Activated naive CD4-positive, alpha-beta T cell treated with anti-CD3 and anti-CD28 coated beads for 36 hours (primary cell): ENCODE measurements at regions of chr16 and their contacts with region 1.

Region 1: GRCh38 chr16:69286941-69287713 is 24.0 kb upstream of the VPS4A start:
- DNase-seq: peak; percentile 68
- H3K4me3 Mint-ChIP-seq: no peak overlapping the region
- H3K27ac Mint-ChIP-seq: no peak overlapping the region
- H3K4me1 Mint-ChIP-seq: peaks cover 2% of the 10 kb centered on the region
- H3K27me3 Mint-ChIP-seq: no peaks in the 10 kb centered on the region

Region 2: DNA sequence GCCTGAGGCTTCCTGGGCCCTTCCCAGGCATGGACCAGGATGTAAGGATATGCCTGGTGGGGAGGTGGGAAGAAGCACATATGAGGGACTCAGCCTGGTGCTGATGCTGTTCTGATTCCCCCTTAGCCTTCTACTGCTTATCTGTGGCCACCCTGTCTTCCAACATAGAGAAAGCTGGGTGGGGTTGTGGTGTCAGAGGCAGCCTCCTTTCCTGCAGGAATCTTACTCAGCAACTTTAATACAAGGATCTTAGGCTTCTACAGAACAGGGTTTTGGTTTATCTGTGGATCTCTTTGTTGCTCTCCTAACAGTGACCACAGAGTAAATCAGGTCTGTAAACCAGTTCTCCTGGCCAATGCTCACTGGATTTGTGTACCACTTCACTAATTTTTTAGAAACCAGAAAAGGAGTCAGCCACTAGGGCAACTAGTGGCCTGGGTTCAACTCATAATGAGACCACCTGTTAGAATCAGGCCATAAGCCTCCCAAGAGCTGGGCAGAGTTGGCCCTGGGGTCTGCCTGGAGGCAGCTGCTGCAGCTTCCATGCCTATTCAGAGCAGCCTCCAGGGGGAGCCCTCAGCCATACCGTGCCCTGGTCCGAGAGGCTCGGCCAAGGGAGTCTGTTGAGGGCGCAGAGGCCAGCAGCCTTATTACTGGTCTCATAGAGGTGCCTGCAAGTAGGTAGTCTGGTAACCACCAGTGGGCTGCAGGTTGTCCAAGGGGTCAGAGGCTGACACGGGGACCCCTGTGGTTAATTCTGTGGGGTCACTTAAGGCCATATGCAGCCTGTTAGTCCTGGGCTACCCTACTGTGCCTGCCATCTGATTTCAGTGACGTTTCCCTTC is 174.6 kb before region 1 on chr16:
- CTCF ChIA-PET with region 1: interaction called, 5 read pairs
- intact Hi-C with region 1: loop called (anchors 1 kb)
- DNase-seq: peak; percentile 65
- H3K4me3 Mint-ChIP-seq: no peak overlapping the region
- H3K27ac Mint-ChIP-seq: no peak overlapping the region
- H3K4me1 Mint-ChIP-seq: peaks cover 7% of the 10 kb centered on the region
- H3K27me3 Mint-ChIP-seq: peaks cover 6% of the 10 kb centered on the region

Region 3: DNA sequence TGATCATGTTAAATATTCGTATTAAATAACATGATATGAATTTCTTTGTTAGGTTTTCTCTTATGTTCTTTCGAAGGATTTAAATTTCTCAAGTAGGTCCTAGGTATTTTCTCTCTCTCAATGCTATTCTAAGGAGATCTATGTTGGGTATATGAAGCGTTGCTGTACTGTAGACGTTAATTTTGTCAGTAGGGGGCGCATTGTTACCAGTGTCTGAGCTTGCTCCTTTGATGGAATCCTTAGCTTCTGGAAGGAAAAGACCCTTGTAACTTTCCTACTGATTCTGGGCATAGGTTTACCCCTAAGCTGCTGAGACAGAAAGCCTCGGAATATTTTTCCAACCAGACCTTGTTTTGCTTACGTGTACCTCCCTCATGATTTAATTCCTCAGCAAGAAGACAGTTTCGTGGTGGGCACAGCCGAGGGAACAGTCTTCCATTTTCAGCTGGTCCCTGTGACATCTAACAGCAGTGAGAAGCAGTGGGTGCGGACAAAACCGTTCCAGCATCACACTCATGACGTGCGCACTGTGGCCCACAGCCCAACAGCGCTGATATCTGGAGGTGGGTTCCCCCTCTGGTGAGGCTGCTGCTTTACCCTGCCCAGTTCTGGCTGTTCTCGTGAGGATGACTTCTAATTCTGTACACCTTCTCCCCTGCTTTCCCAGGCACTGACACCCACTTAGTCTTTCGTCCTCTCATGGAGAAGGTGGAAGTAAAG is 136.8 kb before region 1 on chr16:
- CTCF ChIA-PET with region 1: interaction called, 91 read pairs
- intact Hi-C with region 1: loop called (anchors 1 kb)
- DNase-seq: peak; percentile 66
- H3K4me3 Mint-ChIP-seq: no peak overlapping the region
- H3K27ac Mint-ChIP-seq: no peak overlapping the region
- H3K4me1 Mint-ChIP-seq: no peaks in the 10 kb centered on the region
- H3K27me3 Mint-ChIP-seq: no peaks in the 10 kb centered on the region

Region 4: DNA sequence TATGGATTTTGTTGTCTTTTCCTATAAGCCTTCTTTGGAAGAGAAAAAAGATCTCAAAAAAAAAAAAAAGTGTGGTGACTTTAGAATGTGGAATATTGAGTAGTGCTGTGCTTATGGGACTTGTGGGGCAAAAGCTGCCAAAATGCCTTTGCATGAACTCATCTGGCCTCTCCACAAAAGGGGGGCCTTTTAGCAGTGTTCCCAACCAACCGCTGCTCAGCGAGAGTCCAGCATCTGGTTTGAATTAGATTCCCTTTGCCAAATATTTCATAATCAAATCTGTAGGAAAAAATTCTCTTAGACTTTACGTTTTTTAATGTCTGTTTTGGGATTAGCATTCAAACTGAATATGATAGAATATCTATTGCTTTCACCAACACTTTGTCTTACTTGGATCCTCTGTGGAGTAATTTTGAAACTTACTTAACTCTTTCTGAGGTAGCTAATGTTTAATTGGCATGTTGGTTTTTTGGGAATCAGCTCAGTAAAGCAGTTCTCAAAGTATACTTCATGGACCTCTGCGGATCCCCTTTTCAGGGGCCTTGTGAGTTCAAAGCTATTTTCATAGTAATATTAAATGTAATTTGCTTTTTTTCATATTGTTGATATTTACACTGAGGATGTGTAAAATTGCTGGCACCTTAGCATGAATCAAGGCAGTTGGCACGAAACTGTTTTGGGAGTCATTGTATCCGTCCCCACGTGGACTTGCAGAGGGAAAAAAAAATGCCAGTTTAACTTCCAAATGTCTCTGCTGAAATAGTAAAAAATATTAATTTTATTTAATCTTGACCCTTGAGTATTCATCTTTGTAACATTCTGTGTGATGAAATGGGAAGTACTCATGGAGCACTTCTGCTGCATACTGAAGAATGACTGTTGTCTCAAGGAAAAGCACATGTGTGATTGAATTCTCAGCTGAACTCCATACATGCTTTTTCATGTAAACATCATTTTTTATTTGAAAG is 10.7 kb before region 1 on chr16:
- CTCF ChIA-PET with region 1: interaction called, 11 read pairs
- intact Hi-C with region 1: no loop called
- DNase-seq: no peak
- H3K4me3 Mint-ChIP-seq: no peak overlapping the region
- H3K27ac Mint-ChIP-seq: no peak overlapping the region
- H3K4me1 Mint-ChIP-seq: no peaks in the 10 kb centered on the region
- H3K27me3 Mint-ChIP-seq: no peaks in the 10 kb centered on the region